IMR-90 (cell line): ENCODE measurements at regions of chr7 and their contacts with region 1.

Region 1: GRCh38 chr7:107579885-107580715 is at the start of gene BCAP29:
- DNase-seq: peak; percentile 25
- ATAC-seq: peak; percentile 98
- H3K4me3 ChIP-seq: peak within 1 kb of the TSS; percentile 93
- H3K27ac ChIP-seq: peak within 1 kb of the TSS; percentile 74
- H3K4me1 ChIP-seq: no peaks in the 10 kb centered on the region
- H3K27me3 ChIP-seq: no peaks in the 10 kb centered on the region
- CTCF ChIP-seq: 0 out of 2 replicates have a peak, but pooled peaks have one; percentile 9
- POLR2A ChIP-seq: peak; percentile 80
- RAD21 ChIP-seq: no peak
- total RNA-seq, gene BCAP29: 33.0 and 119 TPM in 2 replicates

Region 2: DNA sequence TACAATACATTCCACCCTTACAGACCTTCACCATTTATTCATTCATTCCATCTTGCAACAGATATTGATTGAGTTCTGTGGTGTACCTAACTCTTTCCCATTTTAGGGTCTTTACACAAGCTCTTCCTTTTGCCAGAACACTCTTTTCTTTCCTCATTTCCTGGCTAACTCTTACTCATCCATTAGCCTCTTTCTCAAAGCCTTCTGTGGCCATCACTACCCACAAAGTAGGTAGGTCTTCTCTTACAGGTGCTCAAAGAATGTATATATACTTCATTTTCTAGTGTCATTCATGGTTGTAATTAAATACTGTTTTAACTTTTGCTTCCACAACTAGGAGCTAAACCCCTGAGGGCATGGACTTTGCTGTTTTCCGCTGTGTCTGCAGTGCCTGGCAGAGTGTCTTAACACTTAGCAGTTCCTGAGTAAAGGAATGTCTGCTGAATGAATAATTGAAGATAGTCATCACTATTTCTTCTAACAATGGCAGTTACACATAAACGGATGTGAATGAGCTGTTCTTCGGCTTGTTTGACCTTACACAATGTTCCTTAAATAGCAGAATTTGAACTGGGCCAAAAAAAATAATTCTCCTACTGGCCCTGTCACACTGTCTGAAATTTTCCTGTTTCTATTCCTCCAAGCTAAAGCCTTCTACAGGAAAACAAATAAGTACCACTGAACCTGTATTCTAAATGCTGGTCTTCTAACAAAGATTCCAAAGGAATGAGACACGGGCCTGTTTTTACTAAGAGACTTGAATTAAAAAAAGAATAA is 15.0 kb after region 1 on chr7:
- CTCF ChIA-PET with region 1: interaction called, 11 read pairs
- POLR2A ChIA-PET with region 1: no interaction called
- dilution Hi-C with region 1: no loop called
- in situ Hi-C with region 1: no loop called
- intact Hi-C with region 1: no loop called
- DNase-seq: peak; percentile 94
- ATAC-seq: peak; percentile 82
- H3K4me3 ChIP-seq: no peak overlapping the region
- H3K27ac ChIP-seq: peak overlapping the region; percentile 5; the same call in 1 of the 2 replicates
- H3K4me1 ChIP-seq: no peaks in the 10 kb centered on the region; the same call in 1 of the 2 replicates
- H3K27me3 ChIP-seq: no peaks in the 10 kb centered on the region
- CTCF ChIP-seq: no peak
- POLR2A ChIP-seq: no peak
- RAD21 ChIP-seq: no peak

Region 3: GRCh38 chr7:107743567-107744344 is 163.7 kb after region 1 on chr7 and contains the start of gene CBLL1:
- CTCF ChIA-PET with region 1: no interaction called
- POLR2A ChIA-PET with region 1: no interaction called
- dilution Hi-C with region 1: no loop called
- in situ Hi-C with region 1: no loop called
- intact Hi-C with region 1: loop called (anchors 5 kb)
- DNase-seq: peak; percentile 94
- ATAC-seq: peak; percentile 98
- H3K4me3 ChIP-seq: peak within 1 kb of the TSS; percentile 87
- H3K27ac ChIP-seq: peak within 1 kb of the TSS; percentile 93
- H3K4me1 ChIP-seq: peaks cover 8% of the 10 kb centered on the region
- H3K27me3 ChIP-seq: no peaks in the 10 kb centered on the region
- CTCF ChIP-seq: peak; percentile 85
- POLR2A ChIP-seq: peak; percentile 79
- RAD21 ChIP-seq: peak; percentile 59
- total RNA-seq, gene CBLL1: 15.6 and 20.3 TPM in 2 replicates